ENCODE measurements at regions of chr19 and their contacts with region 1.

Region 1: DNA sequence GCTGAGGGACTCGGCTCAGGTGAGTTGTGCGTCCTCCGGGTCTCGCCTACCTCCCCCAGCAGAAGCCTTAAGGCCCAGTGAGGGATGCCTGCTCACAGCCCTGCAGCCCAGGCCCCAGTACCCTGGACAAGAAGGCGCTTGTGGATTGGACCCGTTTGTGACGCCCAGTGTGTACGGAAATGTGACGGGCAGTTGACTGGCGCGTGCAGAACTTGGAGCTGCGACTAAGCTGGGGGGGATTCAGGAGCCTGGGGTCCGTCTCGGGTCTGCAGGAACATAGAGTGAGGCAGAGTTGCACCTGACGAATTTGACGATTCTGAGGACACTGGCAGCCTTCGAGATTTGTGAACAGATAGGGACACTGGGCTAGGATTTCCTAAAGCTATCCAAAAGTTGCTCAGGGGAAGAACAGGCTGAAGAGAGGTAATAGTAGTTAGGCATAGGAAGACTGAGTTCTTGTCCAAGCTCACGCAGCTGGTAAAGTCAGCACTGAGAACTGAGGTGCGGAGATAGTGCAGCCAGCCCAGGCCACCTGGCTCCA is 519 bp downstream of the ZNF551 start:
- DNase-seq: no peak
- H3K4me3 ChIP-seq: peak overlapping the region; percentile 99
- H3K27ac ChIP-seq: peak overlapping the region; percentile 11
- H3K27me3 ChIP-seq: no peaks in the 10 kb centered on the region
- CTCF ChIP-seq: no peak

Region 2: GRCh38 chr19:57648331-57649003 is 33.8 kb before region 1 on chr19:
- CTCF ChIA-PET with region 1: no interaction called
- POLR2A ChIA-PET with region 1: no interaction called
- DNase-seq: no peak
- H3K4me3 ChIP-seq: no peak overlapping the region
- H3K27ac ChIP-seq: no peak overlapping the region
- H3K27me3 ChIP-seq: peaks cover 3% of the 10 kb centered on the region
- CTCF ChIP-seq: no peak

Region 3: DNA sequence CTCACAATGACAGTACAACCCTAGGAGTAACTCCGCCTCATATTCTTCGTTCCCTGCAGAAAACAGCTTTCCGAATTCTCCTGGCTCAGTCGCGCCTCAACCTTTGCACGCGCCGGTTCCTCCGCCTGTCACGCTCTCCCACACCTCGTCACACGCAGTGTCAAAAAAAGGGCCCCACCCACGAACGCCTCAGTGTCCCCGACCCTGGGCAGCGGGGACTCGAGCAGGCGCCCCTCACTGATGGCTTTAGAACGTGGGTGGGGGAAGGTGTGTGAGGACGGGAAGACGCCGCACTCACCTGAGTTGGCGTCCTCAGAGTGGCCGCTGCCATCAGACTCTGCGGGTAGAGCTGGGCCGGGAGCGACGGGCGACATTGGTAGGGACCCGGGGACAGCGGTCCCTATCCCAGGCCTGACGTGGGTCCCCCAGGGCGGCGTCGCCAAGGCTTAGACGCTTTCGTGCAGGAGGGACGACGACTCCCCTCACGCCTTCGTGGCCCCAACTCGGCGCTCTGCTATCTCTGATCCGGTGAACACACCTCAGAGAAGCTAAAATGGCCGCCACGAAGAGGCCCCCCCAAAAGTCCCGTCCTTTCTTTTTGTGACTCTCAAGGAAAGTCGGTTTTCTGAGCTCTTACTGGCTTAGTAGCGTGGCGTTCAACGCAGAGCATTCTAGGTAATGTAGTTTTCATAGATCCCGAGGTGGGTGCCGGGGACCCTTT is 26.5 kb after region 1 on chr19 and contains the start of gene ZNF154:
- CTCF ChIA-PET with region 1: no interaction called
- POLR2A ChIA-PET with region 1: interaction called, 10 read pairs
- DNase-seq: peak; percentile 29
- H3K4me3 ChIP-seq: peak within 1 kb of the TSS; percentile 86
- H3K27ac ChIP-seq: peak within 1 kb of the TSS; percentile 73
- H3K27me3 ChIP-seq: no peaks in the 10 kb centered on the region
- CTCF ChIP-seq: no peak
- polyA plus RNA-seq, gene ZNF154: 7.7 and 8.1 TPM in 2 replicates

Region 4: GRCh38 chr19:57769345-57770131 is 87.2 kb after region 1 on chr19 and contains the start of gene ZNF586:
- CTCF ChIA-PET with region 1: no interaction called
- POLR2A ChIA-PET with region 1: no interaction called
- DNase-seq: peak; percentile 80
- H3K4me3 ChIP-seq: peak within 1 kb of the TSS; percentile 82
- H3K27ac ChIP-seq: peak within 1 kb of the TSS; percentile 31
- H3K27me3 ChIP-seq: no peaks in the 10 kb centered on the region
- CTCF ChIP-seq: no peak
- polyA plus RNA-seq, gene ZNF586: 7.5 and 9.8 TPM in 2 replicates

Measured in AG04450 (cell line).